ENCODE measurements at regions of chr9 and their contacts with region 1.

Region 1: DNA sequence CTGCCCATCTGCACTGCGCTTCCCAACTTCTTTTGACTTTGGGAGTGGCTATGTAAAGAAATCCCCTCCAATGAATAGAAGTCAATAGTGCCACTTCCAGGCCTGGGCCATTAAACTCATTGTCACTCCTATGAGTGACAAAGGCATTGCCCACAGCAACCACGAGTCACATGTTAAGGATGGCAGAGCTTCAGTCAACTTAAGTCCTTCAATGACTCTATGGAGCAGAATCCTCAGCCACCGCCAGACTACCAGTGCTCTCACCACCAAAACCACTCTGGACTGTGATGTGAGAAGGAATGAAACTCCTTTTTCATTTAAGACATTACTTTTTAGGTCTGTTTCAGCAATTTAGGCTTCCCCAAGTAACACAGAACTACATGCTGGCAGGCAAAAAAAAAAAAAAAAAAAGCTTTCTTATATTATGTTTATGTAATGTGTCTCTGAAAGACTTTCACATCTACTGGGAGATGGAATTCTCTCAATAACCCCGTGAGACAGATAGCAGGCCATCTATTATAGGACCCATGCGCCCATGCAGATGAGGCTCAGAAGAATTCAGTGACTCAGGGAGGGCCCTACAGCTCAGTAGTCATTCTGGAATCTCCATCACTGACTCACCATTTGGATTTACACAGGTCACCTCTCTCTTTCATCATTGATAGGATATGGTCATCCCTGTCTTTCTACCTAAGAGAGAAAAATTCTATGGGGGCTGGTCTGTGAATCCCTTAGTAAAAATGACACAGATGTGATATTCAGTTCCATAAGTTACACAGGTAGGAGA is 180.5 kb downstream of the CEMIP2 start:
- DNase-seq: no peak
- H3K4me3 ChIP-seq: no peak overlapping the region
- H3K27ac ChIP-seq: no peak overlapping the region
- H3K4me1 ChIP-seq: no peaks in the 10 kb centered on the region
- H3K27me3 ChIP-seq: peaks cover 3% of the 10 kb centered on the region
- CTCF ChIP-seq: no peak

Region 2: DNA sequence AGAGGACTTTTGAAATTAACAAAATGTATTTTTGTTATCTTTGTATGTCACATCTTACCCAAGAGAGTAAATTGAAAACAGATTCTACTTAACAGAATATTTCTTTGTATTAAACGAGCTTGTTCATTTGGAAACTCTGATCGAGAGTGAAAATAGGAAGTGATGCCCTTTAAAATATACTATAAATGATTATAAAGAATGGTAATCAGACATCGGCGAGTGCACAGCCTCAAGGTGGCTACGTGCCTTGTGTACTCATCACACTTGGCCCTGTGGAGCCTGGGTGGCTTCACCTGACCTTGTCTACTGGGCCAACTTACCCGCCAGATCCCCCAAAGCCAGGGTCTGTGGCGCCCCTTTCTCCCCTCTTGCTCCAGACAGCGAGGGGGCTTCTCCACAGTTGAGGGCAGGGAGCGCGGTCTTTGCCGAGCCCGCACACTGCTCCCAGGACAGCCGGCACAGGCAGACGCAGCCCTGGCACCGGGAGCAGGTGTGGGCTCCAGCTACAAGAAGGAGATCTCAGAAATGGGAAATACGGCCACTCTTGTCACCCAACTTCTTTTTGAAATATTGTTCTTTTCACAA is 62.7 kb before region 1 on chr9:
- CTCF ChIA-PET with region 1: no interaction called
- POLR2A ChIA-PET with region 1: no interaction called
- intact Hi-C with region 1: loop called (anchors 10 kb)
- DNase-seq: no peak
- H3K4me3 ChIP-seq: no peak overlapping the region
- H3K27ac ChIP-seq: no peak overlapping the region
- H3K4me1 ChIP-seq: no peaks in the 10 kb centered on the region
- H3K27me3 ChIP-seq: no peaks in the 10 kb centered on the region
- CTCF ChIP-seq: no peak